ENCODE measurements at regions of chr14 and their contacts with region 1.

Region 1: DNA sequence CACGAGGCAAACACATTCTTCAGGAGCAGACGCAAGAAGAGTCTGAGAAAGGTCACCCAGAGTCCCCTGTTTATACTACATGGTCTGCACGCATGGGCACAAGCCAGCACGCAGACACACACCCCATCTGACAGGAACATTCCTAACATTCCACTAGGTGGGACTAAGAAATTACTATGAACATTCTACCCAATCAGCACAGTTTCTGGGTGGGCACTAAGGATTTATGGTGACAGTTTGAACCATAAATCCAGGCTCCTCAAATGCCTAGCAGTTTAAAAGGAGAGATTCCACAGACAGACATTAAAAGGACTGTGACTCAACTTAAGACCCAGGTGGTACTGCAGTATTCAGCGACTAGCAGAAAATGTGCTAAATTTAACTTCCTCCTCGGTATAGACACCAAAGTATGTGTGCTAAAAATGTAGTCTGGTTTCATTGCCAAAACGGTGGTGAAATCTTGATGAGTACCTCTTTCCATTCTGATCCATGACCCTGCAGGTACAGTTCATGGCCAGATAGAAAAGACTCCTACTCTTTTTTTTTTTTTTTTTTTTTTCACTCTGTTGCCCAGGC is 16.2 kb downstream of the ABHD4 start:
- DNase-seq: peak in 1 of 2 donors; percentile 80
- H3K4me3 ChIP-seq: no peak overlapping the region
- H3K27ac ChIP-seq: peak overlapping the region; percentile 70 to 82
- H3K4me1 ChIP-seq: peaks cover 6 to 15% of the 10 kb centered on the region in 2 donors
- H3K27me3 ChIP-seq: no peaks in the 10 kb centered on the region
- CTCF ChIP-seq: no peak

Region 2: DNA sequence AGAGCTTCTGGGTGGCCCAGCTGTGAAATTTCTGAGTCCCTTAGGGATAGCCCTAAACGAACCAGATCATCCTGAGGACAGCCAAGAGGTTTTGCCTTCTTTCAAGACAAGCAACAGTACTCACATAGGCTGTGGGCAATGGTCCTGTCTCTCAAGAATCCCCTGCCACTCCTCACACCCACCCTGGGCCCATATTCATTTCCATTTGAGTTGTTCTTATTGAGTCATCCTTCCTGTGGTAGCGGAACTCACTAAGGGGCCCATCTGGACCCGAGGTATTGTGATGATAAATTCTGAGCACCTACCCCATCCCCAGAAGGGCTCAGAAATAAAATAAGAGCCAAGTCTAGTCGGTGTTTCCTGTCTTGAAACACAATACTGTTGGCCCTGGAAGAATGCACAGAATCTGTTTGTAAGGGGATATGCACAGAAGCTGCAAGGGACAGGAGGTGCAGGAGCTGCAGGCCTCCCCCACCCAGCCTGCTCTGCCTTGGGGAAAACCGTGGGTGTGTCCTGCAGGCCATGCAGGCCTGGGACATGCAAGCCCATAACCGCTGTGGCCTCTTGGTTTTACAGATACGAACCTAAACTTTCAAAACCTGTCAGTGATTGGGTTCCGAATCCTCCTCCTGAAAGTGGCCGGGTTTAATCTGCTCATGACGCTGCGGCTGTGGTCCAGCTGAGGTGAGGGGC is 64.2 kb before region 1 on chr14:
- intact Hi-C with region 1: no loop called
- DNase-seq: peak in 1 of 2 donors; percentile 50
- H3K4me3 ChIP-seq: no peak overlapping the region
- H3K27ac ChIP-seq: no peak overlapping the region
- H3K4me1 ChIP-seq: peaks cover 3 to 13% of the 10 kb centered on the region in 2 donors
- H3K27me3 ChIP-seq: no peaks in the 10 kb centered on the region
- CTCF ChIP-seq: no peak

Region 3: GRCh38 chr14:22589096-22589839 is 25.0 kb before region 1 on chr14 and contains the start of gene DAD1:
- intact Hi-C with region 1: loop called (anchors 1 kb)
- DNase-seq: peak; percentile 98 to 100
- H3K4me3 ChIP-seq: peak within 1 kb of the TSS; percentile 67 to 76
- H3K27ac ChIP-seq: peak within 1 kb of the TSS; percentile 88 to 95
- H3K4me1 ChIP-seq: peaks cover 0 to 21% of the 10 kb centered on the region in 2 donors
- H3K27me3 ChIP-seq: no peaks in the 10 kb centered on the region
- CTCF ChIP-seq: peak in 1 of 3 experiments; percentile 34
- total RNA-seq, gene DAD1: 186 TPM

Region 4: DNA sequence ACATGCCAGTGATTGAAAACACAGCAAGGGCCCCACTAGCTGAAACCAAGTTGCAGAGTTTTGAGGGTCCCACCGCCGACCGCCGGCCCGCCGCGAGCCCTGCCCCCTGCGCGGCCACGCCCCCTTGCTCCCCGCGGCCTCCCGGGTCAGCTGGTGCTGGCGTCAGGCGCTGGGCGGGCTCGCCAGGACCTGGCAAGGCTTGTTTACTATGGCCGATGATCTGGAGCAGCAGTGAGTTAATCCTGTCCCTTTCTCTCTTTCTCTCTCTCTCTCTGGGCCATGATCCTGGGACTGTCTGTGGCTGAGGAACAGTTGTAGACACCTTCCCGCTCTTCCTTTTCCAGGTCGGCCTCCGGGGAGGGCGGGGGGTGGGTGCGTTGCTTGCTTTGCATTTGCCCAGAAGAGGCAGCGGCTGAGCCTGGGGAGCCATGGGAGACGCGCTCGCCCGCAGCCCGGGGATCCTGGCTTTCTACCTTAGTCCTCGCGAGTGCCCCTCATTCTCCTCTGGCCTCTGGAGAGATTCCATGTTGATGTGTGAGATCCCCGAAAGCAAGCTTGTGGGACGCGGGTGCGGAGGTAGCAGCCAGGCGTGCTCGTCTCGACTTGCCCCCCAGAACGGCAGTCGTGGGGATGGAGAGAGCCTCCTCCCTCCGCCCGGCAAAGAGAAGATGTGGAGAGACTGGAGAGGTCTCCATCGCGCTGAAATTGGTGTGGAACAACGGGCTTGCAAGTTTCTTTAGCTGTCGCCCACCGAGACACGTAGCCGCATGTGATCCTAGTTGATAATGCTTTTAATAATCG is 16.0 kb before region 1 on chr14 and contains the start of gene ABHD4:
- intact Hi-C with region 1: loop called (anchors 1 kb)
- DNase-seq: peak; percentile 35 to 89
- H3K4me3 ChIP-seq: peak within 1 kb of the TSS; percentile 76 to 89
- H3K27ac ChIP-seq: peak within 1 kb of the TSS; percentile 84 to 91
- H3K4me1 ChIP-seq: peaks cover 6 to 13% of the 10 kb centered on the region in 2 donors
- H3K27me3 ChIP-seq: no peaks in the 10 kb centered on the region
- CTCF ChIP-seq: peak in 1 of 3 experiments; percentile 36
- total RNA-seq, gene ABHD4: 33.5 TPM

Region 5: GRCh38 chr14:22650960-22651521 is 36.7 kb after region 1 on chr14:
- intact Hi-C with region 1: no loop called
- DNase-seq: peak in 1 of 2 donors; percentile 34
- H3K4me3 ChIP-seq: no peak overlapping the region
- H3K27ac ChIP-seq: no peak overlapping the region
- H3K4me1 ChIP-seq: peaks cover 0 to 2% of the 10 kb centered on the region in 2 donors
- H3K27me3 ChIP-seq: no peaks in the 10 kb centered on the region
- CTCF ChIP-seq: no peak